ENCODE measurements at regions of chr6 and their contacts with region 1.

Region 1: DNA sequence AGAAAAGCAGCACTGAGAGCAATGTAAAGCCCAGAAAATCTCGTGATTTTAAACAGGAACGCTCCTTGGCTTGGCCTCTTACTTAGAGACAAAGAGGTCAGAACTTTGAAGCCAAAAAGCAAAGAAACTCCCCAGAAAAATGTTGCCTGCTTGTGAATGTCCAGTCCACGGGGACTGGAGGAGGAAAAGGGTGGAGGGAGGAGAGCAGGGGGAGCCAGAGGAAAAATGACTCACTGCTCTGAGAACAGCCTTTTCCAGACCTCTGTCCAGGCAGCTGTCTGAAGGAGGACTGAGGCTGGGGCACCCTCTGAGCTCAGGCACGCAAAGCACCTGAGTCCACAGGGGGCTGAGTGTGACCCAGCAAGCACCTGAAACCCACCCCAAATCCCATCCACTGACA is 64.7 kb downstream of the TRAM2 start:
- DNase-seq: peak; percentile 88
- ATAC-seq: peak; percentile 84
- H3K4me3 ChIP-seq: no peak overlapping the region
- H3K27ac ChIP-seq: peak overlapping the region; percentile 91
- H3K4me1 ChIP-seq: peaks cover 55% of the 10 kb centered on the region
- H3K27me3 ChIP-seq: no peaks in the 10 kb centered on the region
- CTCF ChIP-seq: no peak
- POLR2A ChIP-seq: no peak
- RAD21 ChIP-seq: no peak

Region 2: GRCh38 chr6:52566853-52567279 is 54.7 kb after region 1 on chr6:
- CTCF ChIA-PET with region 1: interaction called, 3 read pairs
- POLR2A ChIA-PET with region 1: no interaction called
- dilution Hi-C with region 1: no loop called
- in situ Hi-C with region 1: no loop called
- intact Hi-C with region 1: loop called (anchors 2 kb)
- DNase-seq: peak; percentile 99
- ATAC-seq: peak; percentile 92
- H3K4me3 ChIP-seq: no peak overlapping the region
- H3K27ac ChIP-seq: peak overlapping the region; percentile 86; the same call in 1 of the 2 replicates
- H3K4me1 ChIP-seq: peaks cover 43% of the 10 kb centered on the region
- H3K27me3 ChIP-seq: no peaks in the 10 kb centered on the region
- CTCF ChIP-seq: no peak
- POLR2A ChIP-seq: peak; percentile 44; the same call in 1 of the 2 replicates
- RAD21 ChIP-seq: no peak; the same call in 1 of the 2 replicates

Region 3: DNA sequence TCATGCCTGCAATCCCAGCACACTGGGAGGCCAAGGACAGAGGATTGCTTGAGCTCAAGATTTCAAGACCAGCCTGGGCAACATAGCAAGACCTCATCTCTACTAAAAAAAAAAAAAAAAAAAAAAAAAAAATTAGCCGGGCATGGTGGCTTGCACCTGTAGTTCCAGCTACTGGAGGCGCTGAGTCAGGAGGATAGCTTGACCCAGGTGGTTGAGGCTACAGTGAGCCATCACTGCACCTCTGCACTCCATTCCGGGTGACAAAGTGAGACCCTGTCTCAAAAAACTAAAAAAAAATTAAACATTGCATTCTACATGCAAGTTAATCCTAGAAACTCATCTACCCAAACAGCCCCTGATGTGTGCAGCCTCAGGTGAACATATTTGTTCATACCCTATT is 72.0 kb after region 1 on chr6:
- CTCF ChIA-PET with region 1: no interaction called
- POLR2A ChIA-PET with region 1: interaction called, 14 read pairs
- dilution Hi-C with region 1: no loop called
- in situ Hi-C with region 1: no loop called
- intact Hi-C with region 1: no loop called
- DNase-seq: no peak
- ATAC-seq: no peak
- H3K4me3 ChIP-seq: no peak overlapping the region
- H3K27ac ChIP-seq: no peak overlapping the region
- H3K4me1 ChIP-seq: peaks cover 9% of the 10 kb centered on the region
- H3K27me3 ChIP-seq: no peaks in the 10 kb centered on the region
- CTCF ChIP-seq: no peak
- POLR2A ChIP-seq: no peak
- RAD21 ChIP-seq: no peak

Region 4: DNA sequence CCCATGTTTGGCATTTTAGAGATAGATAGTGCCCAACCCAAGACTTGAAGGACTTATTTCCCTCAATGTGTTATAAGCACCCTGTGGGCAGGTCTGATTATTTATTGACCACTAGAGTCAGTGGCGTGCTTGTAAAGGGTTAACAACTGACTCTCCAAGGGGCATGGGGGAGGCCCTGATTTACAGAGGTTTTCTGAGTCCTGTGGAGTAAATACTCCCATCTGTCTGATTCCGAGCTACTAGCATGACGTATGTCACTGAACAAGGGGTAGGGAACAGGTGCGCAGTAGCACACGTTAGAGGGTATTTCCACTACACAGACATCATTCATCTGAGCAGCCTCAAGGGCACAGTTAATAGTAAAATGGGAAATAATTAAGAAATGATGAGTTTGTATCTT is 82.0 kb after region 1 on chr6:
- CTCF ChIA-PET with region 1: no interaction called
- POLR2A ChIA-PET with region 1: no interaction called
- dilution Hi-C with region 1: no loop called
- in situ Hi-C with region 1: no loop called
- intact Hi-C with region 1: no loop called
- DNase-seq: no peak
- ATAC-seq: no peak
- H3K4me3 ChIP-seq: no peak overlapping the region
- H3K27ac ChIP-seq: peak overlapping the region; percentile 81; the same call in 1 of the 2 replicates
- H3K4me1 ChIP-seq: peaks cover 35% of the 10 kb centered on the region
- H3K27me3 ChIP-seq: no peaks in the 10 kb centered on the region
- CTCF ChIP-seq: no peak
- POLR2A ChIP-seq: no peak
- RAD21 ChIP-seq: no peak

Region 5: DNA sequence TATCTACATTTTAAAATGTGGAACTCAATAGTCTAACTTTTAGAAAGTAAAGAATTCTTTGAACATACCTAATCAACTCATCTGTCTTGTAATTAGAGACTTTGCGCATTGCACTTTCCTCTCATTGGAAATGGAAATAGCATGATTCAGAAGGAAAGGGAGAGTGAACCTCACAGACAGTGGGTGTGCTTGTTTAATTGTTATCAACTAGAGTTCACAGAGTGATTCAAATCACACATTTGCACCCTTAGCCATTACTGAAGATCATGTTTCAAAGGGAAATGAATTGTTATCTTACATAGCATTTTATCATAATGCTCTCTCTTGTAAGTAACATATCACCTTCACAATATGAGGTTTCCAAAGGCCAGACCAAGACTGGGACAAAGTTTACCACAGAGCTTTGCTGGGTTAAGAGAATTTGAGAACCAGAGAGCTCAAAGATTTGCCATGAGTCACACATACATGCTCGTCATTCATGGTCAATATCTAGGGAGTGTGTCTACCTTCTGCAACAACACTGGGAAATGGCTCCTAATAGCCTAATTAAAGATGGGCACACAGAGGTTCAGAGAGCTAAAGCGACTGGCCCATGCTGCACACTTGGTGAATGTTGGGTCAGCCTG is 375.8 kb after region 1 on chr6:
- CTCF ChIA-PET with region 1: no interaction called
- POLR2A ChIA-PET with region 1: no interaction called
- dilution Hi-C with region 1: no loop called
- in situ Hi-C with region 1: no loop called
- intact Hi-C with region 1: no loop called
- DNase-seq: peak; percentile 44
- ATAC-seq: no peak
- H3K4me3 ChIP-seq: no peak overlapping the region
- H3K27ac ChIP-seq: no peak overlapping the region
- H3K4me1 ChIP-seq: no peaks in the 10 kb centered on the region
- H3K27me3 ChIP-seq: peaks cover 2% of the 10 kb centered on the region; the same call in 1 of the 2 replicates
- CTCF ChIP-seq: no peak
- POLR2A ChIP-seq: no peak
- RAD21 ChIP-seq: no peak